Left ventricle myocardium inferior (tissue), 1 donor: ENCODE measurements at regions of chr9 and their contacts with region 1.

Region 1: GRCh38 chr9:98034593-98035546 is 21.7 kb upstream of the NANS start:
- DNase-seq: peak; percentile 81
- H3K4me3 ChIP-seq: peak overlapping the region; percentile 49
- H3K27ac ChIP-seq: no peak overlapping the region
- H3K4me1 ChIP-seq: peaks cover 22% of the 10 kb centered on the region
- H3K27me3 ChIP-seq: no peaks in the 10 kb centered on the region
- CTCF ChIP-seq: peak; percentile 91

Region 2: DNA sequence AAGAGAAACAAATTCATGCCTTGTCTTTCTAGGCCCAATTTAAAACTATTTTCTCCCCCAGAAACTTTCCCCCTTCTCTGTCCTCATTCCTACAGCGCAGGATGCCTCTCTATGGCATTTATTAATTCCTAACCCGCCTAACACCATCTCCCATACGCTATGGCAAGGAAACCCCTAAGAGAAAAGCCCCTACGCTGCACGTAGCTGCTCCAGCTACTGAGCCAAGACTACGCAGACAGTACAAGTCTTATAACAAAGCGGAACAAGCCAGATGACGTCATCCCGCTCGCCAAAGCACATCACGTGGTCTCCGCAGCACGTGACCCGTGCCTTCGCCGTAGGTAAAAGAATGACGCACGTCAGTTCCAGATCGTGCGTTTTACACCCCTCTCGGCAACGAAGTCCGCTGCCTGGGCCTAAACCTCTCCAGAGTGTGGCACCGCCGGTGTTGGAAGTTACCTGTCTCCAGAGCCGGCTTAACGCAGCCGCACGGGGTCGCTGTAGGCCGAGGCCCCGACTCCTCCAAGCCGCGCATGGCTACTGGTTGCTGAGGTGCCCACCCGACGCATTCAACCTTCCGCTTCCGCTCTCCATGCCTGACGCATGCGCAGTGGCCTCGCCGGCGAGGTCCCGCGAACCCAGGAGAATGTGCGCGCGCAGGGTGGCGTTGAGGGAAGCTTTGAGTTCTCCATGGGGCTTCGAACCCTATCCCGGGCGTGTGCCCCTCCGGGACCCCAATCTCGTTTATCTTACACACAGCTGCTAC is 112.7 kb before region 1 on chr9 and contains the start of gene TRMO:
- intact Hi-C with region 1: loop called (anchors 5 kb)
- DNase-seq: peak; percentile 97
- H3K4me3 ChIP-seq: peak within 1 kb of the TSS; percentile 75
- H3K27ac ChIP-seq: peak within 1 kb of the TSS; percentile 99
- H3K4me1 ChIP-seq: peaks cover 38% of the 10 kb centered on the region
- H3K27me3 ChIP-seq: peaks cover 14% of the 10 kb centered on the region
- CTCF ChIP-seq: peak; percentile 75
- total RNA-seq, gene TRMO: 8.2 TPM

Region 3: DNA sequence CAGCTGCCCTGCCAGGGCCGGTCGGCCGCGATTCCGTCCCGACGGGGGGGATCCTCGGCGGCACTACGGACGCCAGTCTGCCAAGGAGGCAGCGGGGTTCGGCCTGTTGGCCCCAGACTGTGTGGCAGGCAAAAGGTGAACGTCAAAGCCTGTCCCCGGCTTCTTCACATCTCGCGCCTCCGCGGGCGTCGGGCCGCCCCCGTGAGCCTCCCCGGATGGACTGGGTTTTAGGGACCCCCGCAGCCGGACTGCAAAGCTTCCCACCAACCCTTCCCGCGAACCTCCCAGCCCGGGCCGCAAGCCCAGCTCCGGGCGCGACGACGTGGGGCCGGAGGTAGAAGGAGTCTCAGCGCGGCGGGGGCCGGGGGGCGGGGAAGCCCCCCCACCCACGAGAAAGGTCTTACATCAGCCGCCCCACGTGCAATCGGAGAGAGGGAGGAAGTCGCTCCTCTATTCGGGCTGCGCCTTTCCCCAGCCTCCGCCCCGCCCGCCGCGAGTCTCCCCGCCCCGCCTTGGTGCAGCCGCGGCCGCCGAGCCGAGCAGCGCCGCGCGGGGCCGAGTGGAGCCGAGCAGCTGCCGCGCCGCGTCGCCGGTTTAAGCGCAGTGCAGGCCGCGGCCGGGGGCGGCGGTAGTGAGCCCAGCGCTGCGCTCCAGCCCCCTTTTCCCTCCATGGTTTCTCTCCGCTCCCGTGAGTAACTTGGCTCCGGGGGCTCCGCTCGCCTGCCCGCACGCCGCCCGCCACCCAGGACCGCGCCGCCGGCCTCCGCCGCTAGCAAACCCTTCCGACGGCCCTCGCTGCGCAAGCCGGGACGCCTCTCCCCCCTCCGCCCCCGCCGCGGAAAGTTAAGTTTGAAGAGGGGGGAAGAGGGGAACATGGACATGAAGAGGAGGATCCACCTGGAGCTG is 51.9 kb before region 1 on chr9 and contains the start of gene ANP32B:
- intact Hi-C with region 1: loop called (anchors 10 kb)
- DNase-seq: peak; percentile 93
- H3K4me3 ChIP-seq: peak within 1 kb of the TSS; percentile 80
- H3K27ac ChIP-seq: peak within 1 kb of the TSS; percentile 99
- H3K4me1 ChIP-seq: peaks cover 65% of the 10 kb centered on the region
- H3K27me3 ChIP-seq: no peaks in the 10 kb centered on the region
- CTCF ChIP-seq: peak; percentile 95
- total RNA-seq, gene ANP32B: 49.9 TPM